Right ventricle myocardium superior (tissue), 1 donor: ENCODE measurements at regions of chr2 and their contacts with region 1.

Region 1: DNA sequence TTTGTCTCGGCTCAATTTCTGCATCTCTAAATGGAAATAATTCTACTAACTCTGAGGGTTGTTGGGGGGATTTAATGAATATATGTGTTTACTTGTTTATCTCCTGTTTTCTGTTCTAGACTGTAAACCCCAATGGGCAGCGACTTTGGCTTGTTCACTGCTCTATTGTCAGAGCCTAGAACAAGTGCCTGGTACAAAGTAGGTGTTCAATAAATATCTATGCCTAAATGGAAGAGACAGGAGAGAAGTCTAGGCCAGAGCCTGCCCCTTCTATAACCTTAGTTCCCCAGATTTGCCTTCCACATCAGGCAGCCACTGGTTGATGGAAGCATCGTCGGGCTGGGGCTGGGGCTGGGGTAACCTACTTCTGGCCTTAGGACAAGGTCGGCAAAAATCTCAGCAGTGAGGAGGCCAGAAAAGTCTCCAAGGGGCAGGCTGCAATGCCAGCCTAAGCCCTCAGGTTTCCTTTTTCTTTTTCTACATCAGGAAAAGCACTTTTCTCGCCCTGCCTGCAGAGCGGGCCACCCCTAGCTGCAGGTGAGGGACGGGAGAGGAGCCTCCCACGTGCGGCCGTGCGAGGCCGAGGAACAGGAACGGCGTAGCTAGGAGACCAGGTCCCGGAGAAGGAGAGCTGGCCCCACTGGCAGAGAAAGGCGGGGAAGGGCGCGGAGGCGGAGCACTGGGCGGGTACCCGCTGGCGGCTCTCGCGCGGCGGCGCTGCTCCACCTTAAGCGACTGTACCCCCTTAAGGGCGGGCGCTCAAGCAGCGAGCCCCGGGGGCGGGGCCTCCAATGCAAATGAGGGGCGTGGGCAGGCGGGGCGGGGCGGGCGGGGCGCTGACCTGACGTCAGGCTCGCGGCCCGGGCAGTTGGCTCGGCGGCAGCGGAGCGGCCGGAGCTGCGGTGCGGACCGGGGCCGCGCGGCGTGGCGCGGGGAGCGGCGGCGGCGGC is at the start of gene CNNM4:
- DNase-seq: peak; percentile 97
- ATAC-seq: peak; percentile 96
- total RNA-seq, gene CNNM4: 31.4 TPM

Region 2: GRCh38 chr2:96485751-96486651 is 274.3 kb before region 1 on chr2:
- intact Hi-C with region 1: no loop called
- DNase-seq: peak; percentile 79
- ATAC-seq: peak; percentile 89

Region 3: DNA sequence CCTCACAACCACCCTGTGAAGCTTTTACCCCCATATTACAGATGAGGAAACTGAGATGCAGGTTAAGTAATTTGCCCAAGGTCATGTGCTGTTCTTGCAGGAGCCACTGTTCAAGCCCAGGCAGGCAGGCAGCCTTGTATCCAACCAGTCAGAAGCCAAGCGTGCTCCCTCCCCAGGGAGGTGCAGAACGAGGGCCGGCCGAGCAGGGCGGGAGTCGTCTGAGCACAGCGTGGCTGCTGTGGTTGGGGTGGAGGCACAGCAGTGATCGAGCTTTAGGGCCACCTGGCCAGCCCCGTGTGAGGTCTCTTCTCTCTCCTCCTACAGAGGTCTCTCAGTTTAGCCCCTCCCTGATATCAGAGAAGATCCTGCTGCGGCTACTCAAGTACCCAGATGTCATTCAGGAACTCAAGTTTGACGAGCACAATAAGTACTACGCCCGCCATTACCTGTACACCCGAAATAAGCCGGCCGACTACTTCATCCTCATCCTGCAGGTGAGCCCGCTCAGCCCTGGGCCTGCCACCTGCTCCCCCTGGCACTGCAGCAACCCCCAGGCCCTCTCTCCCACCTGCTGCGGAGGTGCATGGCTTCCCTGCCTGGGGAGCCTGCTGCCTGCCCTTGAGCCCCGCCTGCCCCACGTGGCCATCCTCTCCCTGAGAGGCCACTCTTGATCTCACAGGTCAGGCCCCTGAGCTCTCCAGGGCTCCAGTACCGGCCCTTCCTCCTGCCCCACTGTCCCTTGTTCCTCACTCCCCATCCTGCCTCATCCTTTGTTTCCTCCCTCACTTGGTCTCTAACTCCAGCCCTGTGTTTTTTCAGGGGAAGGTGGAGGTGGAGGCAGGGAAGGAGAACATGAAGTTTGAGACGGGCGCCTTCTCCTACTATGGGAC is 38.7 kb after region 1 on chr2:
- intact Hi-C with region 1: loop called (anchors 5 kb)
- DNase-seq: no peak
- ATAC-seq: no peak